WTC11 (cell line): ENCODE measurements at regions of chr5 and their contacts with region 1.

Region 1: GRCh38 chr5:76874088-76874581 is 24.3 kb downstream of the S100Z start:
- DNase-seq: no peak
- ATAC-seq: no peak
- H3K4me3 Mint-ChIP-seq: no peak overlapping the region
- H3K27ac Mint-ChIP-seq: peak overlapping the region; percentile 19; the same call in 1 of the 2 replicates
- H3K4me1 Mint-ChIP-seq: peaks cover 41% of the 10 kb centered on the region
- H3K27me3 Mint-ChIP-seq: no peaks in the 10 kb centered on the region
- CTCF ChIP-seq: no peak

Region 2: GRCh38 chr5:76953551-76954382 is 79.6 kb after region 1 on chr5:
- CTCF ChIA-PET with region 1: interaction called, 12 read pairs
- POLR2A ChIA-PET with region 1: no interaction called
- DNase-seq: peak; percentile 55
- ATAC-seq: peak; percentile 66
- H3K4me3 Mint-ChIP-seq: peak overlapping the region; percentile 74
- H3K27ac Mint-ChIP-seq: no peak overlapping the region
- H3K4me1 Mint-ChIP-seq: peaks cover 17% of the 10 kb centered on the region; the same call in 1 of the 2 replicates
- H3K27me3 Mint-ChIP-seq: peaks cover 59% of the 10 kb centered on the region
- CTCF ChIP-seq: no peak